CD8-positive, alpha-beta T cell (primary cell): ENCODE measurements at regions of chr3 and their contacts with region 1.

Region 1: DNA sequence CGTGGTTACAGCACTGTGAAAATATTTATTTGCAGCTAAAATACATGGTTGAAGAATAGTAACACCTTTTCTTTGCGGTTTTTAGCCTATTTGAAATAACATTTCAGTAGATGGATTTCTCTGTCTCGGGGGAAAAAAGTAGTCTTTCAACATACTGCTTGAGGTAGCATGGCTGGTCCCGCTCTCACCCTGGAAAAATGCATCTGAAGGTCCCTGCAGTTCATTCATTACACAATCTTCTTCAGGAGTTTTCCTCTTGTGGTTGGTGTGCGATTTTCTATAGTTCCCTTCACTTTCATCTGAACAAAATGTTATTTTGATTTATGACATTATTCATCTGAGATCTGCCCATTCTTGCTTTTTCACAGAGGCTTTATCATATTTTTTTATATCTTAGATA is 75.9 kb downstream of the STRIT1 start:
- DNase-seq: no peak
- ATAC-seq: no peak
- H3K4me3 ChIP-seq: no peak overlapping the region
- H3K4me3 Mint-ChIP-seq: no peak overlapping the region
- H3K27ac ChIP-seq: no peak overlapping the region
- H3K27ac Mint-ChIP-seq: no peak overlapping the region
- H3K4me1 ChIP-seq: no peaks in the 10 kb centered on the region
- H3K4me1 Mint-ChIP-seq: no peaks in the 10 kb centered on the region
- H3K27me3 ChIP-seq: no peaks in the 10 kb centered on the region
- H3K27me3 Mint-ChIP-seq: no peaks in the 10 kb centered on the region
- CTCF ChIP-seq: no peak

Region 2: DNA sequence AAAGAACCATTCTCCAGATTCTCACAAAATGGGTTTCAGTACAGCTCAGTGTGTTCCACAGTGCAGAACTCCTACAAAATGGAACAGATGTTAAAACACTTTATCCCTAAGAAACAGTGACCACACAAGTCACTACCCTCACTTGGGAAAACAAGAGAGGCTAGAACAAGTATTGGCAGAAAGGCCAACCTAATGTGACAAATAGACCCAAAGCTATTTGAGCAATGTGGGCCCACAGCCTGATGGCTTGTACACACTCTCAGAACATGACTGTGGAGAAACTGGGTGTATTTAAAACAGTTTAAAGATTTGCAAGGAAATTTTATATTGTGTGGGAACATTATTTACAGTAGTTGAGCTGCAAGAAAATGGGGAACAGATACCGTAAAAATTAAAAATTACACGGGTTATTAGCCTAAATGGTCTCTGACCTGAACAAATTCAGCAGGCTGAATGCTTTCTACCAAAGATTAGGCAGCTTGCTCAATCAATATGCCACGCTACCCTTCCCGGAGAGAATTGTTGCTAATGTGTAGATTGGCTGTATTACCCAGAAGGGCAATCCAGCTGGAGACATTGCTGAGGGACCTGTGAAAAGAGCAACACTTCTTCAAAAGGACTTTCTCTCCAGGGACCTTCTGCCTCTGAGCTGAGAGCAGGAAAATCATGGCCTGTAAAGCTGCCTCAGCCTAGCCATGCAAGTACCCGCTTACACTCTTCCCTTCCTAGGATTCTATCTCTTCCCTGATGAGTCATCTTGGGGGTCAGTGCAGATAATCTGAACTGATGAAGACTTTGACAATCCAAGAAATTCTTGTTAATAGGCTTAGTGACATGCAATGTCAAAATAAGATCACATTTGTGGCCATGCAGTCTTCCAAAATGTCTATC is 21.2 kb before region 1 on chr3:
- CTCF ChIA-PET with region 1: no interaction called
- POLR2A ChIA-PET with region 1: no interaction called
- intact Hi-C with region 1: loop called in 1 of 2 experiments (anchors 2 kb)
- DNase-seq: no peak
- ATAC-seq: no peak
- H3K4me3 ChIP-seq: no peak overlapping the region
- H3K4me3 Mint-ChIP-seq: no peak overlapping the region
- H3K27ac ChIP-seq: no peak overlapping the region
- H3K27ac Mint-ChIP-seq: no peak overlapping the region
- H3K4me1 ChIP-seq: no peaks in the 10 kb centered on the region
- H3K4me1 Mint-ChIP-seq: no peaks in the 10 kb centered on the region
- H3K27me3 ChIP-seq: no peaks in the 10 kb centered on the region
- H3K27me3 Mint-ChIP-seq: no peaks in the 10 kb centered on the region
- CTCF ChIP-seq: no peak

Region 3: GRCh38 chr3:155270485-155271342 is 53.1 kb after region 1 on chr3:
- CTCF ChIA-PET with region 1: no interaction called
- POLR2A ChIA-PET with region 1: no interaction called
- intact Hi-C with region 1: no loop called
- DNase-seq: no peak
- ATAC-seq: no peak
- H3K4me3 ChIP-seq: no peak overlapping the region
- H3K4me3 Mint-ChIP-seq: no peak overlapping the region
- H3K27ac ChIP-seq: no peak overlapping the region
- H3K27ac Mint-ChIP-seq: no peak overlapping the region
- H3K4me1 ChIP-seq: no peaks in the 10 kb centered on the region
- H3K4me1 Mint-ChIP-seq: no peaks in the 10 kb centered on the region
- H3K27me3 ChIP-seq: no peaks in the 10 kb centered on the region
- H3K27me3 Mint-ChIP-seq: no peaks in the 10 kb centered on the region
- CTCF ChIP-seq: no peak